BJ (cell line): ENCODE measurements at regions of chr19 and their contacts with region 1.

Region 1: GRCh38 chr19:11987405-11988281 is 22.8 kb downstream of the ZNF763 start:
- DNase-seq: peak; percentile 60
- H3K4me3 ChIP-seq: peak overlapping the region; percentile 87
- H3K27me3 ChIP-seq: no peaks in the 10 kb centered on the region
- CTCF ChIP-seq: no peak; the same call in 1 of the 2 replicates

Region 2: DNA sequence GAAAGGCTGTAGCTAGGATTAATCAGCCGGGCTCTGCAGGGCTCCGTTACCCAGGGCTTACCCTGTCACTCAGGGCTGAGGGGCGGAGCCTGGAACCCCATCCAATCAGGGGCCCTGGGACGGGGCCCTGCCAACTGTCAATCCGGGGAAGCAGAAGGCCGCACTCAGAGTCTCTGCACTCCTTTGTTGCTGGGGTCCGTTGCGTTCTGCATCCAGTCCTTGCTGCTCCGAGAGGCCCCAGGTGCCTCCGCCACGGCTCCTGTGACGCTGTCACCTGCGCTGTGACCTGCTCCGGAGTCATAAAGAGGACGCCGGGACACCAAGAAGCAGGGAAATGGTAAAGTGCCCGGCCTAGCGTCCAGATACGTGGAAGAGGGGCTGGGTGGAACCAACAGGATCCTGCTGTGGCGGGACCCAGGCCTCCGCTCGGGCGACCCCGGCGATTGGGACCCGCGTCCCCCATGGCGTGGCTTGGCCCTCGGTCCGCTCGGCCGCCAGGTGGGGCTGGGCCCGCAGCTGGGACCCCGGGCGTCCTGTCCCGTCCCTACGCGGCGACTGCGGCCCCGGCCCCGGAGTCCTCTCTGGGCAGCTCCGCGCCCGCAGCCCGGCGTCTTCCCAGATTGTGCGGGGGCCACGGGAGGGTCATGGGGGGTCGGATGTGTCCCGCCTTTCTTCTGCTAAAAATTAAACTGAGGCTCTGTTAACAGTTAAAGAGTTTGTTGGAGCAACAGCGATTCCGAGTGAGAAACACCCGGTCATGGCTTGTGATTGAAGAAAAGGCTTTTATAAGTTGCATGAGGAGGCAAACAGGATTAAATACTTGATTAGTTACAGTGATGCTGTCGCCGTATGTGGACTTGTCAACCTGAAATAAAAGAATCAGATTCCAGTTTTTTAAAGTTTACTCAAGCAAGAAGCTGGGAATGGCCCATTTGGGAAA is 189.0 kb before region 1 on chr19 and contains the start of gene ZNF491:
- CTCF ChIA-PET with region 1: interaction called, 16 read pairs
- POLR2A ChIA-PET with region 1: no interaction called
- DNase-seq: peak; percentile 49
- H3K4me3 ChIP-seq: peak within 1 kb of the TSS; percentile 68
- H3K27me3 ChIP-seq: no peaks in the 10 kb centered on the region
- CTCF ChIP-seq: peak; percentile 19; the same call in 1 of the 2 replicates
- polyA plus RNA-seq, gene ZNF491: 0.67 and 1.3 TPM in 2 replicates

Region 3: DNA sequence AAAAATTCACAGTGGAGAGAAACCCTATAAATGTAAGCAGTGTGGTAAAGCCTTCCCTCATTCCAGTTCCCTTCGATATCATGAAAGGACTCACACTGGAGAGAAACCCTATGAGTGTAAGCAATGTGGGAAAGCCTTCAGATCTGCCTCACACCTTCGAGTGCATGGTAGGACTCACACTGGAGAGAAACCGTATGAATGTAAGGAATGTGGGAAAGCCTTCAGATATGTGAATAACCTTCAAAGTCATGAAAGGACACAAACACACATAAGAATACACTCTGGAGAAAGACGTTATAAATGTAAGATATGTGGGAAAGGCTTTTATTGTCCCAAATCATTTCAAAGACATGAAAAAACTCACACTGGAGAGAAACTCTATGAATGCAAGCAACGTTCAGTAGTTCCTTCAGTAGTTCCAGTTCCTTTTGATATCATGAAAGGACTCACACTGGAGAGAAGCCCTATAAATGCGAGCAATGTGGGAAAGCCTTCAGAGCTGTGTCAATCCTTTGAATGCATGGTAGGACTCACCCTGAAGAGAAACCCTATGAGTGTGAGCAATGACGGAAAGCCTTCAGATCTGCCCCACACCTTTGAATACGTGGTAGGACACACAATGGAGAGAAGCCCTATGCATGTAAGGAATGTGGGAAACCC is 155.3 kb before region 1 on chr19:
- CTCF ChIA-PET with region 1: no interaction called
- POLR2A ChIA-PET with region 1: no interaction called
- DNase-seq: no peak
- H3K4me3 ChIP-seq: no peak overlapping the region
- H3K27me3 ChIP-seq: no peaks in the 10 kb centered on the region
- CTCF ChIP-seq: no peak

Region 4: GRCh38 chr19:11887611-11888531 is 99.8 kb before region 1 on chr19 and contains the start of gene ZNF69:
- CTCF ChIA-PET with region 1: interaction called, 70 read pairs
- POLR2A ChIA-PET with region 1: no interaction called
- DNase-seq: peak; percentile 26
- H3K4me3 ChIP-seq: peak within 1 kb of the TSS; percentile 79
- H3K27me3 ChIP-seq: no peaks in the 10 kb centered on the region; the same call in 1 of the 2 replicates
- CTCF ChIP-seq: peak; percentile 52
- polyA plus RNA-seq, gene ZNF69: 3.4 and 3.9 TPM in 2 replicates

Region 5: GRCh38 chr19:11924886-11925650 is 62.6 kb before region 1 on chr19 and contains the start of gene ZNF700:
- CTCF ChIA-PET with region 1: interaction called, 107 read pairs
- POLR2A ChIA-PET with region 1: no interaction called
- DNase-seq: peak; percentile 42
- H3K4me3 ChIP-seq: peak within 1 kb of the TSS; percentile 90
- H3K27me3 ChIP-seq: no peaks in the 10 kb centered on the region
- CTCF ChIP-seq: no peak
- polyA plus RNA-seq, gene ZNF700: 2.5 and 4.8 TPM in 2 replicates

Region 6: DNA sequence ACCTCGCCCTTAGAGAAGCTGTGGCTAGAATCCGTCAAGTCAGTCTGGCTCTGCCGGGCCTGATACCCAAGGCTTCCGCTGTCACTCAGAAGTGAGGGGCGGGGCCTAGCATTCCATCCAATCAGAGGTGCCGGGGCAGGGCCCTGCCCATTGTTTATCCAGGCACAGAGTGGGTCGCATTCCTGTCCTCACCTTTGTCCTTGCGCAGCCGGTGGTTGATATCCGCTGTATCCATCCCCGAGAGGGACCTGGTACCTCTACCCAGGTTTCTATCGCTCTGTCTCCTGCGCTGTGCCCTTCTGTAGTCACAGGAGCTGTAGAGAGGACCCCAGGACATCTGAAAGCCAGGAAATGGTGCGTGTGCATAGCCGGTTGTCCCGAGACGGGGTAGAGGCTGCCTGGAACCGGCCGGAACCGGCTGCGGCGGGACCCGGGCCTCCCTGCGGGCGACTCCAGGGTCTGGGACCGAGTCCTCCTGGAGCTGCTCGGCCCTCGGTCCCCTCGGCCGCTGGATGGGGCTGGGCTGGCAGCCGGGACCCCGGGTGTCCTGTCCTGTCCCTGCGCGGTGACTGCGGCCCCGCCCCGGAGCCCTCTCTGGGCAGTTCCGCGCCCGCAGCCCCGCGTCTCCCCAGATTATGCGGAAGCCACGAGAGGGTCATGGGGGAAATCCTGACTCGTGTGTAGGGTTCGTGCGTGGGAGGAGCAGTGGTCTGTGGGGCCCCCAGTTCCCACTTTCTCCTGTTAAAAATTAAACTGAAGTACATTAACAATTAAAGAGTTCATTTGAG is 22.6 kb before region 1 on chr19 and contains the start of gene ZNF763:
- CTCF ChIA-PET with region 1: interaction called, 66 read pairs
- POLR2A ChIA-PET with region 1: no interaction called
- DNase-seq: peak; percentile 50
- H3K4me3 ChIP-seq: peak within 1 kb of the TSS; percentile 46
- H3K27me3 ChIP-seq: no peaks in the 10 kb centered on the region
- CTCF ChIP-seq: no peak
- polyA plus RNA-seq, gene ZNF763: 1.6 and 2.2 TPM in 2 replicates

Region 7: GRCh38 chr19:11971041-11971440 is 16.6 kb before region 1 on chr19:
- CTCF ChIA-PET with region 1: interaction called, 10 read pairs
- POLR2A ChIA-PET with region 1: no interaction called
- DNase-seq: no peak
- H3K4me3 ChIP-seq: no peak overlapping the region
- H3K27me3 ChIP-seq: no peaks in the 10 kb centered on the region
- CTCF ChIP-seq: no peak

Region 8: DNA sequence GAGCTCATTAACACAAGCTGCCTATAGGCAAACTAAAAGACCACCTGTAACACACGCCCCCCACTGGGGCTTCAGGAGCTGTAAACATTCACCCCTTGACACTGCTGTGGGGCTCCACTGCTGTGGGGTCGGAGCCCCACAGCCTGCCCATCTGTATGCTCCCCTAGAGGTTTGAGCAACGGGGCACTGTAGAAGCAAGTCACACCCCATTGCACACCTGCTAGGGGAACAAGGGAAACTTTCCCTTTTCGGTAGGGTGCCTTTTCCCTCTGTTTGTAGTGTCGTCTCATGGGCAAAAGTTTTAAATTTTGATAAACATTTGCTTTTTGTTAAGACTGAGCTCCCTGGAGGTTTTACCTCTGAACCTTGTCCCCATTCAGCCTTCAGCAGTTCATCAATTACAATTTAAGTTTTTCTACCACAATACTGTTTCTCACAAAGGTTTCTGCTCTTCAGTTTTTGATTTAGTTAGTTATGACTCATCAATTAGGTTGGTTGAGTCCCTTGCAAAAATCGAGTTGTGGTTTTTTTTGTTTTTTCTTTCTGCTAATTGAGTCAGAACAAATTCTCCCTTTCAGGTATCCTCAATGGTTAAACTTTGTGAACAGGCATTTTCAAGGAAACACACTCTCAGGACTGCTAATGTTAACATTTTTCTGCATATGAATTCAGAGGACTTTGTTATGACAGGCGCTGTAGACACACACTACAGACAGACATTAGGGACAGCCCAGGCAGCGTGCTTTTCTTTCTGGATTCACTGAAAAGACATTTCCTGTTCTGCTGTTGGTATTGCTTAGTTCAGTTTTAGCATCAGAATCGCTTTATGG is 12.7 kb after region 1 on chr19:
- CTCF ChIA-PET with region 1: interaction called, 10 read pairs
- POLR2A ChIA-PET with region 1: no interaction called
- DNase-seq: no peak
- H3K4me3 ChIP-seq: no peak overlapping the region
- H3K27me3 ChIP-seq: no peaks in the 10 kb centered on the region
- CTCF ChIP-seq: no peak